ENCODE measurements at regions of chr4 and their contacts with region 1.

Region 1: DNA sequence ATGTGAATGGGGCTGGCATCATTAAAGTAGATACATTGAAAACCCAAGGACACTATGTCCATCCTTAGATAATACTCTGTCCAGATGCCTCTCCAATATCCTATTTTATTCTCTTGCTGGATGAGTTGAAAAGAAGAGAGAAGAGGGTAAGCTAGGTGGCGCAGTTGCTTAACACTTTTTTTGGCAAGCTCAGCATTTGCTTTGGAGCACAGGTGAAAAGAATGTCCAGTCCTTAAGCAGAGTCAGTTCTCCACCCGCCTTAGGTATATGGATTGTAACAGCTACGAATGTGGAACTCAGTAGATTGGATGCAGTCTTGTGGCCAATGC is 208.4 kb downstream of the NWD2 start:
- DNase-seq: peak; percentile 70
- H3K4me3 ChIP-seq: peak overlapping the region; percentile 60
- H3K27ac ChIP-seq: no peak overlapping the region
- H3K4me1 ChIP-seq: peaks cover 7% of the 10 kb centered on the region
- H3K27me3 ChIP-seq: peaks cover 44% of the 10 kb centered on the region

Region 2: DNA sequence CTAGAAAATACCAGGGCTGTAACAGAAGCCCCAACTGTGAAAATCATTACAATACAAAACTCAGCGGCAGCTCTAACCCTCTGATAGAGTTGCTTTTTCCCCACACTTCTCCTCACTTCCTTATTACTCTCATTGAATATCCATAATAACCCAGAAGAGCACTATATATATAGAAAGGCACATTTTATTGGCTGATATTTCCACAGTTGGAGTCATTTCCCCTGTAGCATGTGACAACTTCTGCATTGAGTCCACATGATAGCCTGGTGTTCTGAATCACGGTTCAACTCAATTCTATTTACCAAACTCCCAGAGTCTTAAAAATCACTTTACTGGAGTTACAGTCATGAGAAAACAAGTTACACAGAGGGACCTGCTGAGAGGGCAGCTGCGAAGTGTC is 255.0 kb before region 1 on chr4:
- in situ Hi-C with region 1: no loop called
- DNase-seq: no peak
- H3K4me3 ChIP-seq: no peak overlapping the region
- H3K27ac ChIP-seq: no peak overlapping the region
- H3K4me1 ChIP-seq: no peaks in the 10 kb centered on the region
- H3K27me3 ChIP-seq: no peaks in the 10 kb centered on the region

Region 3: GRCh38 chr4:37561803-37562207 is 108.9 kb after region 1 on chr4:
- in situ Hi-C with region 1: loop called (anchors 10 kb)
- DNase-seq: peak; percentile 36
- H3K4me3 ChIP-seq: no peak overlapping the region
- H3K27ac ChIP-seq: no peak overlapping the region
- H3K4me1 ChIP-seq: no peaks in the 10 kb centered on the region
- H3K27me3 ChIP-seq: no peaks in the 10 kb centered on the region

Region 4: GRCh38 chr4:37793562-37793961 is 340.6 kb after region 1 on chr4:
- in situ Hi-C with region 1: loop called (anchors 25 kb)
- DNase-seq: peak; percentile 51
- H3K4me3 ChIP-seq: no peak overlapping the region
- H3K27ac ChIP-seq: no peak overlapping the region
- H3K4me1 ChIP-seq: no peaks in the 10 kb centered on the region
- H3K27me3 ChIP-seq: peaks cover 17% of the 10 kb centered on the region; the same call in 1 of the 2 replicates

Region 5: DNA sequence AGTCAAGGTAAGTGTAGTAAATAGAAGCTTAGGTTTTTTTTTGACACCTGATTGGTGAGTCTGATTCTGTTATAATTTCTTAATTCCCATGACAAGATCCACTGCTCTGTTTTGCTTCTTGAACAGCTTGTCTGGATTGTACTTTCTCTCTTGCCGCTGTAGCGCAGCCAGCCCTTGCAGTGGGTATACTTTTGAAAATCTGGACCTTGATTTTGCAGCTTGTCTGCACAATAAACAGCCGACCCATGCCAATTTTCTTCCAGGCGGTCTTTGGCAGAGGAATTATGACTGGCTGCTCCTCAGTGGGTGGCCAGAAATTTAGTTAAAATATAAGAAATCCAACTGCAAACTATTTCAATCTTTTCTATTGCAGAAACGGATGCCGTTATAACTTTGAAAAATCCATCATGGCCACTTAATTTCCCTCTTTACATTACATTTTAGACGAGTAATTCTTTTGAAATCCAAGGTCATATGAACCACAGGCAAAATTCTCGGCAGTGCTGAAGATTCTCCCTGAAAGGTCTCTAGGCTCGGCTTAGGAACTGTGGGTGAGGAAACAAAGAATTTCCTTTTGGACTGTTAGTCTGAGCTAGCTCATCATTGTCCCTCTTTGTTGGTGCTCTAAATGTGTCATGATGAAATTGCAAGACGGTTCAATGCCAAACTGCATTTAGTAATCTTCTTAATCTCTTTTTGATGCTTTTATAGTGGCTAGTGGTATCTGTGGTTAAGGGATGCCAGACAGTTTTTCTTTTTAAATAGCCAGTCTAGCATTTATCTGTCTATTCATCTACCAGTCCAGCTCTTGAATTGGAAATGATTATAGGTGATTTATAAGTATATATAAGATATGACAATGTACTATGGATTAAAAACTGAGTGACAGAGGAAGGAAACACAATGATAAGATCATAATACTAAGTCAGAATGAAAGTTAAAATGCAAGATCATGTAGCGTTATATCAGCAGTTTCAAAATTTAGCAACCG is 475.8 kb after region 1 on chr4:
- in situ Hi-C with region 1: no loop called
- DNase-seq: peak; percentile 12
- H3K4me3 ChIP-seq: no peak overlapping the region
- H3K27ac ChIP-seq: no peak overlapping the region
- H3K4me1 ChIP-seq: no peaks in the 10 kb centered on the region
- H3K27me3 ChIP-seq: peaks cover 40% of the 10 kb centered on the region